Spleen (tissue), 13 donors: ENCODE measurements at regions of chr15 and their contacts with region 1.

Region 1: GRCh38 chr15:63600616-63601025 is 3.4 kb downstream of the FBXL22 start:
- DNase-seq: peak; percentile 98
- H3K4me3 ChIP-seq: peak overlapping the region; percentile 54 to 93 (median 67)
- H3K27ac ChIP-seq: peak overlapping the region; percentile 77 to 93 (median 90)
- H3K4me1 ChIP-seq: peaks cover 11 to 88% (median 59%) of the 10 kb centered on the region in 6 donors
- H3K27me3 ChIP-seq: no peaks in the 10 kb centered on the region
- CTCF ChIP-seq: peak in 2 of 11 experiments; percentile 27 to 41
- POLR2A ChIP-seq: peak; percentile 32 to 85 (median 48)

Region 2: GRCh38 chr15:63473999-63474809 is 126.4 kb before region 1 on chr15:
- intact Hi-C with region 1: loop called (anchors 10 kb)
- DNase-seq: peak; percentile 77
- H3K4me3 ChIP-seq: peak overlapping the region in 1 of 8 donors; percentile 16
- H3K27ac ChIP-seq: peak overlapping the region; percentile 58 to 86 (median 76)
- H3K4me1 ChIP-seq: peaks cover 29 to 66% (median 54%) of the 10 kb centered on the region in 6 donors
- H3K27me3 ChIP-seq: no peaks in the 10 kb centered on the region
- CTCF ChIP-seq: peak in 3 of 11 experiments; percentile 9 to 40 (median 34)
- POLR2A ChIP-seq: no peak